ENCODE measurements at regions of chr2 and their contacts with region 1.

Region 1: GRCh38 chr2:119659601-119660342 is 19.2 kb upstream of the TMEM177 start:
- DNase-seq: peak in 1 of 2 experiments; percentile 80
- H3K4me3 ChIP-seq: no peak overlapping the region
- H3K27ac ChIP-seq: no peak overlapping the region
- H3K4me1 ChIP-seq: no peaks in the 10 kb centered on the region
- H3K27me3 ChIP-seq: no peaks in the 10 kb centered on the region
- CTCF ChIP-seq: peak; percentile 77 to 85 (median 78)
- EP300 ChIP-seq: no peak
- POLR2A ChIP-seq: no peak
- RAD21 ChIP-seq: peak; percentile 83 to 86

Region 2: GRCh38 chr2:119641562-119642258 is 18.1 kb before region 1 on chr2:
- CTCF ChIA-PET with region 1: interaction called, 86 read pairs
- POLR2A ChIA-PET with region 1: no interaction called
- DNase-seq: peak; percentile 47 to 86
- H3K4me3 ChIP-seq: no peak overlapping the region
- H3K27ac ChIP-seq: no peak overlapping the region
- H3K4me1 ChIP-seq: peaks cover 0 to 5% (median 2%) of the 10 kb centered on the region in 4 experiments; a peak in 2 of 7 replicates
- H3K27me3 ChIP-seq: no peaks in the 10 kb centered on the region; a peak in 1 of 7 replicates
- CTCF ChIP-seq: peak; percentile 95 to 99 (median 99)
- EP300 ChIP-seq: no peak
- POLR2A ChIP-seq: no peak
- RAD21 ChIP-seq: peak; percentile 92 to 96

Region 3: DNA sequence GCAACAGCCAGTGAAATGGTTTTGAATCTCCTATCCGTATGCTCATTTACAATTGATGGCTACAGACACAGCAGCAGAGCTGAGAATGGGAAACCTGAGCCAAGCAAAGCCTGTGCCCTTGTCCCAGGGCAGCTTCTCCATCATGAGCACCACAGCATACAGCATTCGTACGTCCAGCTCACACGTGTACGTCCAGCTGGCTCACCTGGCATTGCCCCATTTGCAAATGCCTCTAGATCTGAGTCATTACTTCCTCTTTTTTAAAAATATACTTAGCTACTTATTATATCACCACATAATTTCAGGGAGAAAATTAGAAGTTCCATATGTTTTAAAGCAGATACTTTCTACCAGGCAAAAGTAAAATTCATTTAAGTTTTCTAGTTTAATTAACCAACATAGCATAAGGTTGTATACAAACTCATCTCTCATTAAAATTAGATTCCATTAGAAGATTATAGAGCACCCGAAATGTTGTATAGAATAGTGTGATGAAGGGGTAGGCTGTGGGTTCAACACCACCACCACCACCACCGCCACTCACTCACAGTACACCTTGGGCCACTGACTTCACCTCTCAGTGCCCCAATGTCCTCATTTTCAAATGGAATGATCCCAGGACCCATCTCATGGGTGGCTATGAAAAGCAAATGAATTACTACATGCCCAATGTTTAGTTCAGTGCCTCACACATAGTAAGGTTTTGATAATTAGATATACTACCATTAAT is 12.2 kb before region 1 on chr2:
- CTCF ChIA-PET with region 1: interaction called, 86 read pairs
- POLR2A ChIA-PET with region 1: no interaction called
- DNase-seq: no peak
- H3K4me3 ChIP-seq: no peak overlapping the region
- H3K27ac ChIP-seq: no peak overlapping the region
- H3K4me1 ChIP-seq: no peaks in the 10 kb centered on the region
- H3K27me3 ChIP-seq: no peaks in the 10 kb centered on the region
- CTCF ChIP-seq: no peak
- EP300 ChIP-seq: no peak
- POLR2A ChIP-seq: no peak
- RAD21 ChIP-seq: no peak

Region 4: GRCh38 chr2:119772128-119772527 is 112.4 kb after region 1 on chr2:
- CTCF ChIA-PET with region 1: no interaction called
- POLR2A ChIA-PET with region 1: no interaction called
- DNase-seq: no peak
- H3K4me3 ChIP-seq: no peak overlapping the region
- H3K27ac ChIP-seq: no peak overlapping the region
- H3K4me1 ChIP-seq: peaks cover 0 to 9% (median 4%) of the 10 kb centered on the region in 4 experiments
- H3K27me3 ChIP-seq: no peaks in the 10 kb centered on the region
- CTCF ChIP-seq: no peak
- EP300 ChIP-seq: no peak
- POLR2A ChIP-seq: no peak
- RAD21 ChIP-seq: no peak

Measured in H1 (cell line).